ENCODE measurements at regions of chr10 and their contacts with region 1.

Region 1: GRCh38 chr10:46255801-46256747 is 30.7 kb upstream of the ANTXRL start:
- DNase-seq: peak; percentile 69
- H3K4me3 Mint-ChIP-seq: no peak overlapping the region
- H3K27ac Mint-ChIP-seq: no peak overlapping the region
- H3K4me1 Mint-ChIP-seq: peaks cover 21% of the 10 kb centered on the region
- H3K27me3 Mint-ChIP-seq: no peaks in the 10 kb centered on the region

Region 2: DNA sequence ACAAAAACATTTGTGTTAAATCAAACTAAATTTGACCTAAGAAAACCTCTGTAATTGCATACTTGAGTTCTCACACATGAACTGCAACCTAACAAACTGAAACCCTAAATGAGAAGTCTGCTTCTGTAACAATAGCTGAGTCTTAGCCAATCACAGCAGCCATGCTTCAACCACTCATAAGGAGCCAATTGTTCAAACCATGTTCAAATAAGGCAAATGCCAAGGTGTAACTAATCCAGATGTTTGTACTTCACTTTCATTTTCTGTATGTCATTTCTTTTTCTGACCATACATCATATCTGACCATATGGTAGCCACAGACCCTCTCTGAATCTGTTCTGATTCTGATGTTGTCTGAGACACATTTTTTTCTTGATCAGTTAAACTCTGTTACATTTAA is 16.8 kb before region 1 on chr10:
- CTCF ChIA-PET with region 1: no interaction called
- POLR2A ChIA-PET with region 1: no interaction called
- intact Hi-C with region 1: loop called (anchors 2 kb)
- DNase-seq: peak; percentile 8
- H3K4me3 Mint-ChIP-seq: no peak overlapping the region
- H3K27ac Mint-ChIP-seq: no peak overlapping the region
- H3K4me1 Mint-ChIP-seq: peaks cover 26% of the 10 kb centered on the region
- H3K27me3 Mint-ChIP-seq: no peaks in the 10 kb centered on the region

Region 3: GRCh38 chr10:46291817-46292572 is 35.9 kb after region 1 on chr10:
- CTCF ChIA-PET with region 1: no interaction called
- POLR2A ChIA-PET with region 1: no interaction called
- intact Hi-C with region 1: no loop called
- DNase-seq: peak; percentile 7
- H3K4me3 Mint-ChIP-seq: no peak overlapping the region
- H3K27ac Mint-ChIP-seq: no peak overlapping the region
- H3K4me1 Mint-ChIP-seq: no peaks in the 10 kb centered on the region
- H3K27me3 Mint-ChIP-seq: no peaks in the 10 kb centered on the region

Region 4: DNA sequence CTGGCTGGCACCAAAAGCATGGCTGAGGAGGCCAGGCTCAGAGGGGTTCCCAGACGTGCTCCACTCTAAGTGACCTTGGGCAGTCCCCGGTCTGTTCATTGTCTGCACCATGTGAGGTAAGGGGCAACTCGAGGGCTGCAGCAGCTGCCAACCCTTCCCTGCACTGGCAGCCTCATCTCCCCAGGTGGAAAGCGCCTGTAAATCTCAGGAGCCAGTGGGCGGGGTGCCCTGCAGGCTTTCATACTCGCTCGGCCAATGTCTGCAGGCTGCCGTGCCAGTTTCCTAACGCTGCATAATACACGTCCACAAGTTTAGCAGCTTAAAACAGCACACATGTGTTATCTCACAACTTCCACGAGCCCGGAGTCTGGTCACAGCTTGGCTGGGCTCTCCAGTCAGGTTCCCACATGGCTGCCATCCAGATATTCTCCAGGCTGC is 1031.3 kb after region 1 on chr10:
- CTCF ChIA-PET with region 1: no interaction called
- POLR2A ChIA-PET with region 1: no interaction called
- intact Hi-C with region 1: no loop called
- DNase-seq: no peak
- H3K4me3 Mint-ChIP-seq: no peak overlapping the region
- H3K27ac Mint-ChIP-seq: no peak overlapping the region
- H3K4me1 Mint-ChIP-seq: peaks cover 22% of the 10 kb centered on the region
- H3K27me3 Mint-ChIP-seq: no peaks in the 10 kb centered on the region